IMR-90 (cell line): ENCODE measurements at regions of chr6 and their contacts with region 1.

Region 1: DNA sequence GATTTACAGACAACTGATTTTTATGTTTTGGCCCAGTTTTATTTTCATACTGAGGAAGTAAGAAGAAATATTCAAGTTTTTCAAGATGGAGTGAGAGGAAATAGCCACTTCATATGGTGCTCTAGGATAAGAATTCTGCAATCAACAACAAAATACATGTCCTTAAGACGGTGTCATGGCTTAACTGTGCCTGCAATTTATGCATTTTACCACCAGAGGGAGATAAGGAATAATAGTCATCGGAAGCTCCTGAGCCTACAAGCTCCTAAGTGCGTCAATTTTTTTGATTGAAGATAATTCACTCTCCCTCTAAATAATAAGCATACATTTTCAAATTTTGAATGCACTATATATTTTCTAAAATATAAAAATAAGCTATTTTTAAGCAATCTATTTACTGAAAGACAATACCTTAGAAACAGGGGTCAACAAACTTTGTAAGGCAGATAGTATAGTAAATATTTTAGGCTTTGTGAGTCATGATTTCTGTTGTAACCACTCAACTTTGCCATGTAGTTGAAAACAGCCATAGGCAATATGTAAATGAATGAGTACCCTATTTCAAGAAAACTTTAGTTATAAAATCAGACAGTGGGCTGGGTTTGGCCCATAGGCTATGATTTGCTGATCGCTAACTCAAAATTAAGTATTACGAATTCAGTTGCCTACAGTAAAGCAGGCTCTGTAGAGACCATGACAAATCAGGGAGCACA is 230.9 kb upstream of the DTNBP1 start:
- DNase-seq: peak; percentile 27
- ATAC-seq: no peak
- H3K4me3 ChIP-seq: no peak overlapping the region
- H3K27ac ChIP-seq: no peak overlapping the region
- H3K4me1 ChIP-seq: no peaks in the 10 kb centered on the region
- H3K27me3 ChIP-seq: no peaks in the 10 kb centered on the region; the same call in none of the 2 replicates
- CTCF ChIP-seq: no peak; the same call in 1 of the 2 replicates
- POLR2A ChIP-seq: no peak
- RAD21 ChIP-seq: 0 out of 2 replicates have a peak, but pooled peaks have one; percentile 5

Region 2: DNA sequence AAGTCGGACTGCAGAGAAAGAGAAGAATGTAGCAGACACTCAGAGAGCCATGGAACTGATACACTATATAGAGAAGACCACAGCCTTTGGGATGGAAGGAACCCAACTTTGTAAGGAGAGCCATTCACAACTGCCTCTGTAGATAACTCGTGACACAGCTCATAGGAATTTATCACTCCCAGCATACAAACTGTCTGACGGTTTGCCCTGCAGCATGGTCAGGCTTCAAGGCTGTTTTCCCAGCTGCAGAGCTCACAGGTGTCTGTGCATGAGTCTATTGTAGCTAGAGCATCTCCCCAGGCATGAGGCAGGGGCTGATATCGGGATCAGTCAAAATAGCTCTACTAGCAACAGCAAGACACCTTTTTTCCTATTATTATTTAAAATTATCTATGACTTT is 100.4 kb before region 1 on chr6:
- CTCF ChIA-PET with region 1: interaction called, 11 read pairs
- POLR2A ChIA-PET with region 1: no interaction called
- dilution Hi-C with region 1: no loop called
- in situ Hi-C with region 1: no loop called
- intact Hi-C with region 1: no loop called
- DNase-seq: peak; percentile 35
- ATAC-seq: peak; percentile 48; the same call in 1 of the 2 replicates
- H3K4me3 ChIP-seq: no peak overlapping the region
- H3K27ac ChIP-seq: no peak overlapping the region
- H3K4me1 ChIP-seq: no peaks in the 10 kb centered on the region
- H3K27me3 ChIP-seq: peaks cover 18% of the 10 kb centered on the region
- CTCF ChIP-seq: no peak
- POLR2A ChIP-seq: no peak
- RAD21 ChIP-seq: no peak

Region 3: DNA sequence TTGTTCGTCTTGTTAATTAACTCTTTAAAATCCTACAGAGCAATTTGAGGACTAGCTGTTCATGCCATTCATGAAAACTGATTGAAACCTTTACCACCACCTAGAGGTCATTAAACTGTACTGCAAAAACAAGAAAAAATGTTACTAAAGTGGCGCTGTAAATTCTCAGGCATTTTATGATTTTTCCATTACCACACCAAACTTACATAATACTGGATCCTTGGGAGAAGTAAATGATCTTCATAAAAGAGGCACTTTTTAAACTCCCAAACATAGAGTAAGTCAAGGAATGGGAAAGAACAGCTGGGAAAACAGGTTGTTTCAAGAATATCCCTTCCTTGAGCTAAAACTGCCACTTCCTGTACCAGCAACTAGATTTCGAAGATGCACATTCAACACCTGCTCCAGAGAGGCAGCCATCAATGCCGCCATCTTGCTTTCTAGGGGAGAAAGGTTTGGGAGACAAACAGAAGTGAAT is 289.5 kb after region 1 on chr6:
- CTCF ChIA-PET with region 1: no interaction called
- POLR2A ChIA-PET with region 1: no interaction called
- dilution Hi-C with region 1: no loop called
- in situ Hi-C with region 1: no loop called
- intact Hi-C with region 1: loop called (anchors 10 kb)
- DNase-seq: peak; percentile 56
- ATAC-seq: peak; percentile 79
- H3K4me3 ChIP-seq: no peak overlapping the region
- H3K27ac ChIP-seq: no peak overlapping the region
- H3K4me1 ChIP-seq: no peaks in the 10 kb centered on the region
- H3K27me3 ChIP-seq: peaks cover 42% of the 10 kb centered on the region
- CTCF ChIP-seq: peak; percentile 71
- POLR2A ChIP-seq: no peak
- RAD21 ChIP-seq: peak; percentile 69

Region 4: GRCh38 chr6:17178754-17179529 is 1285.2 kb after region 1 on chr6:
- CTCF ChIA-PET with region 1: no interaction called
- POLR2A ChIA-PET with region 1: no interaction called
- dilution Hi-C with region 1: no loop called
- in situ Hi-C with region 1: no loop called
- intact Hi-C with region 1: no loop called
- DNase-seq: peak; percentile 68
- ATAC-seq: peak; percentile 70
- H3K4me3 ChIP-seq: no peak overlapping the region
- H3K27ac ChIP-seq: no peak overlapping the region
- H3K4me1 ChIP-seq: no peaks in the 10 kb centered on the region
- H3K27me3 ChIP-seq: peaks cover 2% of the 10 kb centered on the region
- CTCF ChIP-seq: no peak
- POLR2A ChIP-seq: no peak
- RAD21 ChIP-seq: no peak